WTC11 (cell line): ENCODE measurements at regions of chr16 and their contacts with region 1.

Region 1: GRCh38 chr16:15073101-15073500 is 17.2 kb upstream of the NTAN1 start:
- DNase-seq: no peak
- ATAC-seq: no peak
- H3K4me3 Mint-ChIP-seq: no peak overlapping the region
- H3K27ac Mint-ChIP-seq: no peak overlapping the region; the same call in 1 of the 2 replicates
- H3K4me1 Mint-ChIP-seq: no peaks in the 10 kb centered on the region
- H3K27me3 Mint-ChIP-seq: no peaks in the 10 kb centered on the region
- CTCF ChIP-seq: no peak

Region 2: GRCh38 chr16:14963380-14964173 is 109.5 kb before region 1 on chr16:
- CTCF ChIA-PET with region 1: no interaction called
- POLR2A ChIA-PET with region 1: no interaction called
- DNase-seq: no peak
- ATAC-seq: no peak
- H3K4me3 Mint-ChIP-seq: no peak overlapping the region
- H3K27ac Mint-ChIP-seq: no peak overlapping the region
- H3K4me1 Mint-ChIP-seq: no peaks in the 10 kb centered on the region
- H3K27me3 Mint-ChIP-seq: no peaks in the 10 kb centered on the region; the same call in 1 of the 2 replicates
- CTCF ChIP-seq: no peak

Region 3: GRCh38 chr16:15032547-15033308 is 40.4 kb before region 1 on chr16:
- CTCF ChIA-PET with region 1: no interaction called
- POLR2A ChIA-PET with region 1: no interaction called
- DNase-seq: no peak
- ATAC-seq: no peak
- H3K4me3 Mint-ChIP-seq: no peak overlapping the region
- H3K27ac Mint-ChIP-seq: peak overlapping the region; percentile 60; the same call in 1 of the 2 replicates
- H3K4me1 Mint-ChIP-seq: peaks cover 4% of the 10 kb centered on the region
- H3K27me3 Mint-ChIP-seq: no peaks in the 10 kb centered on the region
- CTCF ChIP-seq: no peak

Region 4: DNA sequence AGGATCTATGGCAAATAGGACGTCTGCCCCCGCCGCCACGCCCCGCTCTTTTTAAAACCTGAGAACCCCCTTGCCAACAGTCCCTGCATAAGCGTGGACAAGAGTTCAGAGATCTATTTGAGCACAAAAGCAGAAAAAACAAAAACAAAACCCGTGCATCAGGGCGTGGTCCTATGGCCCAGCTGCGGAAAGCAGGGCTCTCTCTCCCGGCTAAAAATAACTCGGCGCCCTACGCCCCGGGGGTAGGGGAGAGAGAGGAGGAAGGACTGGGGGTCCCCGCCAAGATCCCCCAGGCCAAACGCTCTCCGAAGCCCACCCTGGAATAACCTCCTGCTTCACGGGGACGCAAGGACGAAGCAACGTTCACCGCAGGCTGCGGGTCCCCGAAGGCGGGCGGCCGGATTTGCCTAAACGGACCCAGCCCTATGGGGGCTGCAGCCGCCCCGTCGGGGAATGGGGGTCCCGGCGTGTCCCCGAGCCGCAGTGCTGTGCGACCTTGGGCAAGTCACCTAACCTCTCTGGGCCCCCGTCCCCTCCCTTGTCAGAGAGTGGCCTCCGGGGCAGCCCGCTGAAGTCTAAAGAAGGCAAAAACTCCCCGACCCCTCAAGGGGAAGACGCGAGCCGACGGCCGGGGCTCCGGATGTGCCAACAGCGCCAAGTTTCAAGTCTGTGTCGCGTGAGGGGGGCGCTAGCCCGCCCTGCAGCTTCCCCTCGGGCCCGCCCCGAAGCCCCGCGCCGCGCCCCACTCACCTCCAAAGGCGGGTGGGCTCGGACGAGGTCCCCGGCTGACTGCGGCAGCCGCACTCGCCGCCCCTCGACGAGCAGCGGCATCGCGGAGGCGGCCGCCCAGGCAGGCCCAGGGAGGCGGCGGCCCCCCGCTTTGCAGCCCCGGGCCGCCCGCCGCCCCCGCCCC is 17.7 kb before region 1 on chr16:
- CTCF ChIA-PET with region 1: interaction called, 20 read pairs
- POLR2A ChIA-PET with region 1: no interaction called
- DNase-seq: peak; percentile 69
- ATAC-seq: peak; percentile 45
- H3K4me3 Mint-ChIP-seq: peak overlapping the region; percentile 85
- H3K27ac Mint-ChIP-seq: no peak overlapping the region
- H3K4me1 Mint-ChIP-seq: peaks cover 12% of the 10 kb centered on the region; the same call in 1 of the 2 replicates
- H3K27me3 Mint-ChIP-seq: no peaks in the 10 kb centered on the region
- CTCF ChIP-seq: 0 out of 2 replicates have a peak, but pooled peaks have one; percentile 3